MCF 10A (cell line): ENCODE measurements at regions of chr1 and their contacts with region 1.

Region 1: GRCh38 chr1:246689409-246690008 is 34.7 kb upstream of the SCCPDH start:
- DNase-seq: peak; percentile 93
- H3K4me3 Mint-ChIP-seq: peak overlapping the region; percentile 53
- H3K27ac Mint-ChIP-seq: no peak overlapping the region
- H3K4me1 Mint-ChIP-seq: no peaks in the 10 kb centered on the region
- H3K27me3 Mint-ChIP-seq: no peaks in the 10 kb centered on the region
- CTCF ChIP-seq: peak; percentile 97

Region 2: GRCh38 chr1:246417152-246417812 is 272.2 kb before region 1 on chr1:
- CTCF ChIA-PET with region 1: no interaction called
- POLR2A ChIA-PET with region 1: no interaction called
- intact Hi-C with region 1: no loop called
- DNase-seq: no peak
- H3K4me3 Mint-ChIP-seq: no peak overlapping the region
- H3K27ac Mint-ChIP-seq: no peak overlapping the region
- H3K4me1 Mint-ChIP-seq: no peaks in the 10 kb centered on the region
- H3K27me3 Mint-ChIP-seq: no peaks in the 10 kb centered on the region
- CTCF ChIP-seq: no peak

Region 3: DNA sequence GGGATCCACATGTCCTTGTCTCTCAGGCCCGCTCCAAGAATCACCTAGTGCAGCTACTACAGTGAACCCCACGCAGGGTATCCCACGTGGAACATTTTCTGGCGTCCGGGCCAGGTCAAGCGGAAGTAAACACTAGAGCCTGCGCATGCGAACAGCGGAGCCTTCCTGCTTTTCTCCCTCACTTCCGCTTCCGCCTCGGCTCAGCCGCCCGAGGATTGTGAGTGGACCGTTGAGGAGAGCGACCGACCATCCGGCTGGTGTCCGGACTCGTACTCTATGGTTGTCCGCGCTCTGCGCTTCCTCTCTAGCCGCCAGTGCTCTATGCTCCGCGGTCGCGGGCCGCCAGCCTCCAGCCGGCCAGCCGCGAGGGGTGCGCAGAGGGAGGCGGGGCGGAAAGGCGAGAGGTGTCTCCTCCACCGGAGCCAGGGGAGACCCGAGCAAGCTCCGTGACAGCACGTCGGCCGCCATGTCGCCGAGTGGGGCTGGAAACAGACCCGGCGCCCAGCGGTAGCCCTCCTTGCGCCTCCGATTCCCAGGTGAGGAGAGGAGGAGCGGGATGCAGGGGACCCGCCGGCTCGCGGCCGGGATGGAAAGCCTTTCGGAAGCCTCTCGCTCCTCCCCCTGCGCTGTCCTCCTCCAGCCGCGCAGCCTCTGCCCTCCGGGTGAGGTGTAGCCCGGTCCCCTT is 123.2 kb before region 1 on chr1 and contains the starts of genes CNST and TFB2M:
- CTCF ChIA-PET with region 1: interaction called, 4 read pairs
- POLR2A ChIA-PET with region 1: interaction called, 3 read pairs
- intact Hi-C with region 1: loop called (anchors 2 kb)
- DNase-seq: peak; percentile 100
- H3K4me3 Mint-ChIP-seq: peak within 1 kb of the TSS; percentile 93
- H3K27ac Mint-ChIP-seq: peak within 1 kb of the TSS; percentile 97
- H3K4me1 Mint-ChIP-seq: peaks cover 34% of the 10 kb centered on the region
- H3K27me3 Mint-ChIP-seq: no peaks in the 10 kb centered on the region
- CTCF ChIP-seq: no peak
- total RNA-seq, gene CNST: 44.8 and 48.3 TPM in 2 replicates
- total RNA-seq, gene TFB2M: 38.3 and 52.0 TPM in 2 replicates

Region 4: GRCh38 chr1:246658567-246658966 is 30.9 kb before region 1 on chr1:
- CTCF ChIA-PET with region 1: interaction called, 29 read pairs
- POLR2A ChIA-PET with region 1: no interaction called
- intact Hi-C with region 1: no loop called
- DNase-seq: no peak
- H3K4me3 Mint-ChIP-seq: no peak overlapping the region
- H3K27ac Mint-ChIP-seq: no peak overlapping the region
- H3K4me1 Mint-ChIP-seq: no peaks in the 10 kb centered on the region
- H3K27me3 Mint-ChIP-seq: no peaks in the 10 kb centered on the region
- CTCF ChIP-seq: no peak

Region 5: GRCh38 chr1:246724016-246724730 is 34.7 kb after region 1 on chr1 and contains the start of gene SCCPDH:
- CTCF ChIA-PET with region 1: interaction called, 21 read pairs
- POLR2A ChIA-PET with region 1: no interaction called
- intact Hi-C with region 1: no loop called
- DNase-seq: peak; percentile 63
- H3K4me3 Mint-ChIP-seq: peak within 1 kb of the TSS; percentile 79
- H3K27ac Mint-ChIP-seq: peak within 1 kb of the TSS; percentile 8
- H3K4me1 Mint-ChIP-seq: peaks cover 10% of the 10 kb centered on the region
- H3K27me3 Mint-ChIP-seq: no peaks in the 10 kb centered on the region
- CTCF ChIP-seq: no peak
- total RNA-seq, gene SCCPDH: 28.4 and 32.2 TPM in 2 replicates

Region 6: DNA sequence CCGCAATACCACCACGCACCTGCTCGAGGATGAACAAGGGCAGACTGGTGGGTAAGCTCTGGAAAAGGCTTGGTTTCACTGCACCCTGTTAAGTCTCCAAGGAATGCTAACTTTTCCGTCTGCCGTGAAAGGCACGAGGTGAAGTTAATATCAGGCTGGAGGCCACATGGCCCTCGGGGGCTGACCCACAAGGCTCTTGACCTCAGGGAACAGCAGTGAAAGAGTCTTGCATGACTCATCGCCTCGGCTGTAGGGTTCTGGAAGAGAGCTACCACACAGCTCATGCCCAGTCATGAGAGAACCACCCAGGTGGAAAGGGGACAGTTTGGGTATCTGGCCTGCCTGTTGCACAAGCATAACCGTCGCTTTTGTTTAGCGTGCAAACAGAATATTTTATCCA is 59.4 kb after region 1 on chr1:
- CTCF ChIA-PET with region 1: interaction called, 464 read pairs
- POLR2A ChIA-PET with region 1: interaction called, 8 read pairs
- intact Hi-C with region 1: loop called (anchors 1 kb)
- DNase-seq: peak; percentile 88
- H3K4me3 Mint-ChIP-seq: no peak overlapping the region
- H3K27ac Mint-ChIP-seq: peak overlapping the region; percentile 21
- H3K4me1 Mint-ChIP-seq: peaks cover 12% of the 10 kb centered on the region
- H3K27me3 Mint-ChIP-seq: no peaks in the 10 kb centered on the region
- CTCF ChIP-seq: no peak

Region 7: GRCh38 chr1:246779561-246780175 is 90.2 kb after region 1 on chr1:
- CTCF ChIA-PET with region 1: interaction called, 14 read pairs
- POLR2A ChIA-PET with region 1: no interaction called
- intact Hi-C with region 1: no loop called
- DNase-seq: no peak
- H3K4me3 Mint-ChIP-seq: no peak overlapping the region
- H3K27ac Mint-ChIP-seq: no peak overlapping the region
- H3K4me1 Mint-ChIP-seq: no peaks in the 10 kb centered on the region
- H3K27me3 Mint-ChIP-seq: no peaks in the 10 kb centered on the region
- CTCF ChIP-seq: no peak